Heart left ventricle (tissue), 16 donors: ENCODE measurements at regions of chr1 and their contacts with region 1.

Region 1: DNA sequence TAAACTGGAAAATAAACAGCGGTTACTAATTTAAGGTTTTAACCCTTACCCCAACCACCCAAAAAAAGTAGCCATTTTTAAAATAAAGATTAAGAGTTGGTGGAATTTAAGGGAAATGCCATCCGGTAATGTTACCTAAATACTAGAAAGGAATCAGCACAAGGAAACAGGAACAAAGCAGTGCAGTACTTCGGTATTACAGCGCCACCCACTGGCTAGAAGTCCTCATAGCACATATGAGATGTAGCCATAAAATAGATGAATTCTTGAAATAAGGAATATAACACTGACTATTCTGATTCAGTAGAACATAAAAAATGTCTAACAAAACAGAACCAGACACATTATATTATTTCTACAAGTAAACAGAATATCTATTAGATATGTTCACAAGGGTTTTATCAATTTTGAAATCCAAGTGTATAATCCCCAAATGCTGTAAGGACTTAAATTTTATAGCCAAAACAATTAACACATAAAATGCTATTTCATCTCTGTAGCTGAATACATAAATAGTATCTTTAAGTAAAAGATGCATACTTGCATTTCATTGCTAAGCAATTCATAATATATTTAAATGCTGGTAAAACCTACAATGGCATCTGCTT is 58.8 kb downstream of the FRRS1 start:
- DNase-seq: peak in 4 of 5 donors; percentile 57 to 76 (median 66)
- ATAC-seq: peak; percentile 58 to 86 (median 80)
- H3K4me3 ChIP-seq: no peak overlapping the region
- H3K27ac ChIP-seq: peak overlapping the region in 3 of 12 donors; percentile 24 to 34 (median 29)
- H3K4me1 ChIP-seq: peaks cover 0 to 14% (median 0%) of the 10 kb centered on the region in 12 donors
- H3K27me3 ChIP-seq: no peaks in the 10 kb centered on the region
- CTCF ChIP-seq: peak; percentile 81 to 96 (median 92)
- POLR2A ChIP-seq: no peak

Region 2: DNA sequence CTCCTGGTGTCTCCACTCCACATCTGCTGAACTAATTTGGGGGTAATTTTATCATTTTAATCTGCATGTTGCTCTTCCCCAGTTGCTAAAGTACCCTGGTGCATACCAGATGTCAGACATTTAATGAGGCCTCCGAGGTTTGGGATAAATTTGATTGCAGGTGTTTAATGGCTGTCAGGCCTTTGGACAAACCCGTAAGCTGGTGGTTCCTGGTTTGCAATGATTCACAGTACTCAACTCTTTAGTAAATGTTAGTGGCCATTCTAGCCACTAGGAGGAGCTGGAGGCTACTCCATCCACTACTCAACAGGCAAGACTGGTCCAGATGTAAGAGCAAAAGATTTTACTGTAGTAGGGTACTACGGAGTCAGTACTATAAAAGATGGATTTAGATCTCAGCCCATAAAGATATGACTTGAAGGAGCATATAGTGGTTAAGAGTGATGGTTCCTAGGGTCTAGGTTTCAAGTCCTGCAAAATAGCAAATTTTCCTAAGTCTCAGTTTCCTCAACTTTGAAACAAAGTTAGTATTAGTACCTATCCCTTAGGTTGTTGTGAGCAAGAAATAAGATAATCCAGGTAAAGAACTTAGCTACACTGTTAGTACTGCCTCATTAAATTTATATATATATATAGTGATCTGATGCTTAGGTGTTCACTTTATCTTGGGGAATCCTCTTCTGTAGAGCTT is 913.3 kb before region 1 on chr1:
- intact Hi-C with region 1: loop called in 4 of 10 experiments (anchors 10 kb)
- DNase-seq: peak in 3 of 5 donors; percentile 12 to 24 (median 23)
- ATAC-seq: peak in 3 of 4 donors; percentile 73 to 86 (median 78)
- H3K4me3 ChIP-seq: no peak overlapping the region
- H3K27ac ChIP-seq: no peak overlapping the region
- H3K4me1 ChIP-seq: no peaks in the 10 kb centered on the region
- H3K27me3 ChIP-seq: no peaks in the 10 kb centered on the region
- CTCF ChIP-seq: peak; percentile 43 to 80 (median 63)
- POLR2A ChIP-seq: no peak

Region 3: DNA sequence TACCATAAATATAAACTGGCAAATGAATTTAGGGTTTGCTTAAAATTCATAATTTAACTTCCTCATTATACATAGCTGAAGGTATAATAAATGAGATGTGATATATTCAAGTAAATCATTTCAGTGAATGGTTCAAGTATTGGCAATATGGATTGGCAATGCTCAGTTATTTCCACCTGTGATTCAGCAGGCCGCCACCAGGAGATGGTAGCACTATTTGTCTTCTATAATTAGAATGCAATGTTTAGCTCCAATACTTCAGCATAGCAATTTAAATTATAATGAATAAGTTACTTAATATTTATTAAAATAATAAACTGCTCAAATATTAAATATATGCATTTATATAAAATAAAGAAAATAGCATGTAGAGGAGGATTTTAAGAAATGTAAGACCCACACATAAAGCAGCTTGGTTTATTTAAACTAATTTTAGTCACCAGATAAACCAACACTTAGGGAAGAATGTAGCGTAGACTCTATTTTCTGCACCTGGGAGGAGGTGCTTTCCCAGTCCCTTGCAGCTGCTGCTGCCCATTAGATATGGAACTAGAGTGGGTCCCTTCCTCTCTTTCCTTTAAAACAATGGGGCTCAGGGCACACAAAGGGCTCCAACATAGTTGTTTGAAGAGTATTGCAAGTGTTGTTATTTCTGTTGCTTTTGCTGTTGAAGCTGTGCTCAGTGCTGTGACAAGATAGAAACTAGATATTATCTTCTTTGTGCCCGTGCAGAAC is 381.3 kb before region 1 on chr1:
- intact Hi-C with region 1: loop called in 1 of 10 experiments (anchors 10 kb)
- DNase-seq: no peak
- ATAC-seq: no peak
- H3K4me3 ChIP-seq: no peak overlapping the region
- H3K27ac ChIP-seq: no peak overlapping the region
- H3K4me1 ChIP-seq: peaks cover 0 to 4% (median 0%) of the 10 kb centered on the region in 12 donors
- H3K27me3 ChIP-seq: no peaks in the 10 kb centered on the region
- CTCF ChIP-seq: peak in 11 of 12 donors; percentile 14 to 49 (median 25)
- POLR2A ChIP-seq: no peak

Region 4: DNA sequence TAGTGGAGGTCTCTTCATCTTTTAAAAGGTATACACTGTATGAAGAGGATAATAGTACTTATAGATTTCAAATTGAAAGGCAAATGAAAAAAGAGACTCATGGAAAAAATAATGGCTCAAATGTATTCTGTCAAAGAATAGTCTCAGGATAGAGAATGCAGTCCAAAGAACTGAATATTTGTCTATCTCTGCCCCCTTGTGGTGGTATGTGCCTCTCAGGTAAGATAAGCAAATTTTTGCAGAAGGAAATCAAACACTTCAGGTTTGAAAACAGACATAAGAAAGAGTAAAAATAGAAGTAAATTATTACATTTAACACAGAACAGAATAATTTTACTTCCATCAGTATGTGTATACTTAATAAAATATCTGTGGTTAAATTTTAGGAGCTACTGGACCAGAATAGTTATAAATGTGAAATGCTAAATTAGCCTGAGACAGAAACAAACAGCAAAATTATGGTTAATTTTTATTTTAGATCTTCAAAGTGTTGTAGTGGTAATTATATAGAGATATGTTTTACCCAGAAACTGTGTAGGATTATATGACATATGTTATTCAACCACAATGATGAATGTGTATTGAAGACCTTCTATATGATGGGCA is 226.1 kb before region 1 on chr1:
- intact Hi-C with region 1: loop called in 7 of 10 experiments (anchors 5 to 10 kb)
- DNase-seq: peak in 3 of 5 donors; percentile 27 to 56 (median 38)
- ATAC-seq: peak in 2 of 4 donors; percentile 66 to 81
- H3K4me3 ChIP-seq: no peak overlapping the region
- H3K27ac ChIP-seq: no peak overlapping the region
- H3K4me1 ChIP-seq: peaks cover 0 to 3% (median 0%) of the 10 kb centered on the region in 12 donors
- H3K27me3 ChIP-seq: no peaks in the 10 kb centered on the region
- CTCF ChIP-seq: peak; percentile 63 to 88 (median 80)
- POLR2A ChIP-seq: no peak

Region 5: GRCh38 chr1:99590578-99591209 is 116.9 kb before region 1 on chr1:
- intact Hi-C with region 1: loop called in 2 of 10 experiments (anchors 5 to 10 kb)
- DNase-seq: peak in 4 of 5 donors; percentile 52 to 61 (median 60)
- ATAC-seq: peak; percentile 73 to 93 (median 83)
- H3K4me3 ChIP-seq: no peak overlapping the region
- H3K27ac ChIP-seq: peak overlapping the region in 9 of 12 donors; percentile 2 to 81 (median 50)
- H3K4me1 ChIP-seq: peaks cover 0 to 27% (median 10%) of the 10 kb centered on the region in 12 donors
- H3K27me3 ChIP-seq: no peaks in the 10 kb centered on the region
- CTCF ChIP-seq: no peak
- POLR2A ChIP-seq: no peak

Region 6: GRCh38 chr1:99599678-99600175 is 107.9 kb before region 1 on chr1:
- intact Hi-C with region 1: loop called in 2 of 10 experiments (anchors 5 to 10 kb)
- DNase-seq: peak; percentile 24 to 69 (median 66)
- ATAC-seq: peak in 3 of 4 donors; percentile 55 to 90 (median 90)
- H3K4me3 ChIP-seq: no peak overlapping the region
- H3K27ac ChIP-seq: peak overlapping the region in 9 of 12 donors; percentile 0 to 82 (median 55)
- H3K4me1 ChIP-seq: peaks cover 0 to 45% (median 11%) of the 10 kb centered on the region in 12 donors
- H3K27me3 ChIP-seq: no peaks in the 10 kb centered on the region
- CTCF ChIP-seq: no peak
- POLR2A ChIP-seq: no peak